ENCODE measurements at regions of chrX and their contacts with region 1.

Region 1: DNA sequence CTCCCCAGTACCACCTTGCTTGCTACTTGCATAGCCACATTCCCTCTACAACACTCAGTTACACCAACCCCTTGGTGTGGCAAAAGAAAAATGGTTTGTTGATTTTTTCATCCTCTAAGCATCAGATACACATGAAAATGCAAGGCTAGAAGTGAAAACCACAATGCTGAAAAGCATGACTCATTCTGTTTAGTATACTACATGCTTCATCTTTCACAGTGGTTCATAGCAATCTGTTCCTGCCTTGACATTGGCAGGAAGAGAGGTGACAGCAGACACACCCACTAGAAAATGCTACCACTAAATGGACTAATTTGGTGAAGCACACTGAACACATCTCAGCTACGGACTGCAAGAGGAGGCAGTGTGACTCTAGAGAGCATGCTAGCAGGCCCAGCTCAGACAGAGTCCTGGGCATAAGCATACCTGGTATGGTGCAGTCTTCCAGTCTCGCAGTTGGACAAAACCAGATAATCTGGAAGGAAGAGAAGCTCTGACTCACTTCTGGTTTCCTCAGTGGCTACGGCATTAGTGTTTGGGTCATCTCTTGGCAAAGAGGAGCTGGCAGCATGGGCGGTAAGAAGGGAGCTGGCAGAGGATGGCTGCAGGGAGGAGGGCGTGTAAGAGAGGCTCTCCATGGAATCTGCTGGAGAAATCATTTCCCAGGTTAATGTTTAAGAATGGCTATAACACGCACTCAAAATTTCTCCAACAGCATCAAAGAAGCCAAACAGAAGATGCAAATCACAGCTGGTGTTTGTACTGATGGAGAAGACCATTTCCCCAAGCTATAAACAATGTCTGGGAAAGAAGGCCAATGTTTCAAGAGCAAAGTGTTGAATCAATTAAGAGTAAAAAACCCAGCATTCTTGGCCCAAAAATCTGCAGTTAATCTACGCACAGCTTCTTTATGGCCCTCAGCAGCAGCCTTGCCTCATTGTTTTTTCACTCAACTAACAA is 37.8 kb downstream of the GAB3 start:
- DNase-seq: no peak
- H3K4me3 ChIP-seq: no peak overlapping the region
- H3K27ac ChIP-seq: no peak overlapping the region
- H3K4me1 ChIP-seq: peaks cover 7% of the 10 kb centered on the region
- H3K27me3 ChIP-seq: no peaks in the 10 kb centered on the region
- CTCF ChIP-seq: no peak

Region 2: GRCh38 chrX:154649503-154650470 is 63.3 kb before region 1 on chrX:
- CTCF ChIA-PET with region 1: no interaction called
- POLR2A ChIA-PET with region 1: no interaction called
- intact Hi-C with region 1: loop called (anchors 10 kb)
- DNase-seq: no peak
- H3K4me3 ChIP-seq: no peak overlapping the region
- H3K27ac ChIP-seq: no peak overlapping the region
- H3K4me1 ChIP-seq: no peaks in the 10 kb centered on the region
- H3K27me3 ChIP-seq: no peaks in the 10 kb centered on the region
- CTCF ChIP-seq: no peak